Endothelial cell of umbilical vein (primary cell): ENCODE measurements at regions of chr11 and their contacts with region 1.

Region 1: GRCh38 chr11:64778508-64779346 is at the start of gene SF1:
- DNase-seq: peak; percentile 100
- H3K4me3 ChIP-seq: peak within 1 kb of the TSS; percentile 69 to 85 (median 75)
- H3K27ac ChIP-seq: peak within 1 kb of the TSS; percentile 80
- H3K4me1 ChIP-seq: peaks cover 22% of the 10 kb centered on the region
- H3K27me3 ChIP-seq: no peaks in the 10 kb centered on the region
- CTCF ChIP-seq: no peak
- POLR2A ChIP-seq: peak; percentile 72
- total RNA-seq, gene SF1: 322 and 342 TPM in 2 replicates

Region 2: DNA sequence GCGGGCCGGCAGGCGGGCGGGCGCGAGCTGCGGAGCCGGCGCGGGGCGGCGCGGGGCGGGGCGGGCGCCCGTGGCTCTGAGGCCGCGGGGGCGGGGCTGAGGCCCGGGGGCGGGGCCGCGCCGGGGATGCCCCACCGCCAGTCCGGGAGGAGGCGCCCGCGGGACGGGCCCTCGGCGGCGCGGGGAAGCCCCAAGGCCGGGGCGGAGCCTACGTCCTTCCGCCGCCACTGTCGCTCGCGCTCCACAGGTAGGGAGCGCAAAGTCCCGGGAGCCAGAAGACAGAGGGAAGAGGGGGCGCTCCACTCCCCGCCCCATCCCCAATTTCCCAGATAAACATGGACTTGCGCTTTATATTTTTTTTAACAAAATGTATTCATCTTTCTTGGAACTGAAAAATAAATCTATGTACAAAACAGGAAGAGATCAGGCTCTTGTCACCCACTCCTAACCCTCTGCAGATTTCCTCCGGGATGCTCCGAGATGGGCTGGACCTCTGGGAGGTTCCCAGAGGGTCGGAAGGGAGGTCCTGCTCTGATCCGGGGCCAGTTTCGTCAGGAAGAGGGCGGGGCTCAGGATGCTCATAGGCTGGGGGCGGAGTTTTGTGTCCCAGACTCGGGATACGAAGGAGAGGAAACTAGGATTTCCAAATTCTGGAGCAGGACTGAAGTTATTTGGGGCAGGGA is 24.6 kb after region 1 on chr11 and contains the start of gene MAP4K2:
- CTCF ChIA-PET with region 1: interaction called, 6 read pairs
- POLR2A ChIA-PET with region 1: no interaction called
- dilution Hi-C with region 1: no loop called
- intact Hi-C with region 1: loop called (anchors 2 kb)
- DNase-seq: peak; percentile 74
- H3K4me3 ChIP-seq: peak within 1 kb of the TSS; percentile 59 to 87 (median 70)
- H3K27ac ChIP-seq: peak within 1 kb of the TSS; percentile 75
- H3K4me1 ChIP-seq: peaks cover 36% of the 10 kb centered on the region
- H3K27me3 ChIP-seq: no peaks in the 10 kb centered on the region
- CTCF ChIP-seq: peak; percentile 5 to 28
- POLR2A ChIP-seq: no peak
- total RNA-seq, gene MAP4K2: 43.3 and 48.5 TPM in 2 replicates

Region 3: DNA sequence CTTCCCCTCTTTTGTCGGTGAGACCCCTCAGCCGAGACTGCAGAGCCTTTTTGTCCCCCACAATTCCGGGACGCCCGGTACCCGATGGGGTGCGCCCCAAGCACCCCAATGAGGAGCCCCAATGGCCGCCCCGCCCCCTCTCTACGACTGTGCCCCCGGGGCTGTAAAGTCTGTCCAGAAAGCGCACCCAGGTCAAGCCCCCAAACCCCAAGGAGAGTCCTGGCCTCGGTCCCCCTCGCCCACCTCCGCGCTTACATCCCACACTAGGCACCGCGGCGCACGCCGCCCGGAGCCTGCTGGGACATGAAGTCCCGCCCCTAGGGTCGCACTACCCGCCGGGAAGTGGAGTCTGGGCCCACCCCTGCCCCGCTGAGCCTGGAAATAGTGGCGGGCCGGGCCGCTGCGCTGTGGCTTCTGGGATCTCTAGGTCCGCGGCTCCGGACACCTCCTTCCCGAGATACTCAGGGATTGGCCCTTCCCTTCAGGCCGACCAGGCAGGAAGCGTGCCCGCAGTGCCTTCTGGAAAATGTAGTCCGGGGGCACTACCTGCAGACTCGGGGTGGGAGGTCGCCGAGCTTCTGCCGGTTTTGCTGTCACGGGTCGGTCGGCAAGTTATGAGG is 31.7 kb after region 1 on chr11 and contains the start of gene MEN1:
- CTCF ChIA-PET with region 1: interaction called, 3 read pairs
- POLR2A ChIA-PET with region 1: no interaction called
- dilution Hi-C with region 1: no loop called
- intact Hi-C with region 1: loop called (anchors 1 kb)
- DNase-seq: peak; percentile 97
- H3K4me3 ChIP-seq: peak within 1 kb of the TSS; percentile 62 to 84 (median 70)
- H3K27ac ChIP-seq: no peak within 1 kb of the TSS
- H3K4me1 ChIP-seq: peaks cover 8% of the 10 kb centered on the region
- H3K27me3 ChIP-seq: no peaks in the 10 kb centered on the region
- CTCF ChIP-seq: no peak
- POLR2A ChIP-seq: peak; percentile 87
- total RNA-seq, gene MEN1: 41.1 and 41.6 TPM in 2 replicates

Region 4: DNA sequence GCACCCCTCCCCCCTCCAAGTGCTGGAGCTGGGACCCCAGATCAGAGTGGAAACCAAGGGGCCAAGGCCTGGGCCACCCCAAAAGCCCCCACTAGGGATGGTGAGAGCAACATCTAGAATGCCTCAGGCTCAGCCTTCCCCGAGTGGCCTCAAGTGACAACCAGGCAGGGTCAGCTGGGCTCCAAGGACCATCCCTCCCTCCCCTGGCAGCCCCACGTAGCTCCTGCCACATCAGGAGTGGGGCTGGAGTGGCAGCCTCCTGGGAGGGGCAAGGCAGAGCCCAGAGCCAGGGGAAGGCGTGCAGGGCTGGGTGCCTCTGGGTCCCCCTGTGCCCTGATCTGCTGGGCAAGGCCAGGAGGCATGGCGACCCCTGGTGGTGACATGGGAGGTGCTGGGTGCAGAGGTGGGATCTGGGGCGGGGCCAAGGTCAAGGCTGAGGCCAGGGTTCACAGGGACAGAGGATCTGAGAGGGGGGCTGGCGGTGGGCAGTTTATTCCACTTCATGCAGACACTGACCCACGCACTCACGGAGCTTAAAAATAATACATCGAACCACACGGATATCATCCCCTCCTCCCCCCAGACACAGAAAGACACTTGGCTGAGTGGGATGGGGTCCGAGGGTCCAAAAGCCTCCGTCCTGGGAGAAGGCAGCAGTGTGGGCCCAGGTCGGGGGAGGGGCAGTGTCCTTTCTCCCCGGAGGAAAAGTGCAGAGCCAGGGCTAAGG is 115.5 kb after region 1 on chr11:
- CTCF ChIA-PET with region 1: no interaction called
- POLR2A ChIA-PET with region 1: no interaction called
- dilution Hi-C with region 1: no loop called
- intact Hi-C with region 1: loop called (anchors 1 kb)
- DNase-seq: peak; percentile 44
- H3K4me3 ChIP-seq: no peak overlapping the region
- H3K27ac ChIP-seq: no peak overlapping the region
- H3K4me1 ChIP-seq: no peaks in the 10 kb centered on the region
- H3K27me3 ChIP-seq: no peaks in the 10 kb centered on the region
- CTCF ChIP-seq: peak; percentile 93 to 95
- POLR2A ChIP-seq: no peak